ENCODE measurements at regions of chr2 and their contacts with region 1.

Region 1: GRCh38 chr2:149119368-149119767 is 80.9 kb downstream of the LYPD6B start:
- DNase-seq: no peak
- H3K27ac ChIP-seq: no peak overlapping the region
- CTCF ChIP-seq: no peak

Region 2: DNA sequence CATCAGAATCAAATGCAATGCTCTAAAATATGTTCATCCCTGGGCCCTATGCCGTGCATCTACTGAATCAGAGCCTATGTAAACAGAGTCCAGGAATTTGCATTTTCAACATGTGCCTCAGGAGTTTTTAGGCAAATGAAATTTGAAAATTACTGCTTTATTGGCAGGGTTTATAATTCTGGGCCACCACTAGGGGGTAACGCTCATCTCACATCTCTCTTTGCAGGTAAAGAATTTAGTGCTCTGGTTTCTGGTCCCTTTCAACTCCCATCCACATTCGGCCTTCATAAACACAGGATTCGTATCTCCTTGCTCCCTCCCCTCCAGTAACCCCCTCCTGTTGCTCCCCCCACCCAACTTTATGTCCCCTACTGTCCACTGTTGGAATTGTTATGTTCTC is 31.6 kb before region 1 on chr2:
- CTCF ChIA-PET with region 1: interaction called, 10 read pairs
- POLR2A ChIA-PET with region 1: no interaction called
- DNase-seq: peak; percentile 15
- H3K27ac ChIP-seq: no peak overlapping the region
- CTCF ChIP-seq: no peak; the same call in 1 of the 2 replicates

Region 3: DNA sequence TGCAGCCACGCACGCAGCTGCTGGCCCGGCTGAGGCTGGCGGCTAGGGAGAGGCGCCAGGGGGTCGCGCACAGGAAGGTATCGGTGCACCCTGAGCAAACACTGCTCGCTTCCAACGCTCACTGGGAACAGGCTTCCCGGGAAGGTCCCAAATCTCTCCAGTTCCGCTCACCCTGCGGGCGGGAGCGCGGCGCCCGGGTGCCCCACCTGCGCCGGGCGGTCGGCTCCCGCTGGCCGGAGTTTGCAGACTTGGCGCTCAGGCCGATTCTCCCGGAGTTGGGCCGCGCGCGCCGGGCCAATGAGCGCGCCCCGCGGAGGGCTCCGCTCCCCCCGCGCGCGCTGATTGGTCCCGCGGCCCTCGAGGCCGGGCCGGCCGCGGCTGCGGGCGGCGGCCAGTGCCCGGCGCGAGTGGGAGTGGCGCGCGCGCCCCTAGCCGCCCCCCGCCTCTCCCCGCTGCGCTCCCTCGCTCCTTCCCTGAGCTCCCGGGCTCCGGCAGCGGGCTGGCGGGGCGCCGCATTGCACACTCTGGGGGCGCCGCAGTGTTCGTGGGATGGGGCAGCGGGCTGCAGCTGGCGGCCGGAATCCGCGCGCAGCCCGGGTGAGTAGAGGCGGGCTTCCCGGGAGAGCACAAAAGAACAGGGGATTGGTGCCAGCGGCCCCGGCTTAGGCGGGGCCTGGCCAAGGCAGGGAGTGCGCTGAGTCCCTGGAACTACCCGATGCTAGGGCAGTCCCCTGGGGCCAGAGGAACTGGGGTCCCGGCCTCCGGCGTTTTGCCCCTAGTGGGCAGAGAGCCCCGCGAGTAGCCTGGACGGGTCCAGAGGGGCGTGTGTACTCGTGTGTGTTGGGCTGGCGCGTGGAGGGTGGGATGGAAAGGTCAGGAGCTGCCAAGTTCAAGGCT is 211.0 kb after region 1 on chr2 and contains the start of gene LYPD6:
- CTCF ChIA-PET with region 1: no interaction called
- POLR2A ChIA-PET with region 1: no interaction called
- DNase-seq: peak; percentile 87
- H3K27ac ChIP-seq: peak within 1 kb of the TSS; percentile 89
- CTCF ChIP-seq: no peak

Measured in RWPE1 (cell line).